Endothelial cell of umbilical vein (primary cell): ENCODE measurements at regions of chr3 and their contacts with region 1.

Region 1: DNA sequence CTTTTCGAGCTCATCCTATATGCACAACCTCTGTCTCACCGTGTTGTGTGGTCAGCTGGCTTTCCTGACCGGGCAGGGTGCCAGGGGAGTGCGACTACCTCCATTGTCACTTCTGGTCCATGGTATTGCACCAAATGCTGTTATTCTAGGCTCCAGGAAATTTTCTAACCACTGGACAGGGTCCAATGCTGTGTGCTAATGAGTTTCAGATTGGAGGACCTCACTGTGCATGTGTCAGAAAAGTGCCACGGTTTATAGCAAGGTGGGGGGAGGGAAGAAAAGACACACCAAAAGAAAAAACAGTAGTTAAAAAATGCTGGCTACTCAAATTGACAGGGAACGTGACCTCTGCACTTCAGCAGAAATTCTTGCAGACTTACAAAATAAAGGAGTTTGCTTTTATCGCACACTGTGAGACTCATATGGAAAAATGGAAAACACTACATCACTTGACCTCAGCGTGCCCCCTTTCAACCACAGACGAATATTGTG is 480.1 kb downstream of the FOXP1 start:
- DNase-seq: peak; percentile 94
- H3K4me3 ChIP-seq: no peak overlapping the region
- H3K27ac ChIP-seq: peak overlapping the region; percentile 92
- H3K4me1 ChIP-seq: peaks cover 65% of the 10 kb centered on the region
- H3K27me3 ChIP-seq: no peaks in the 10 kb centered on the region
- CTCF ChIP-seq: no peak
- POLR2A ChIP-seq: no peak

Region 2: DNA sequence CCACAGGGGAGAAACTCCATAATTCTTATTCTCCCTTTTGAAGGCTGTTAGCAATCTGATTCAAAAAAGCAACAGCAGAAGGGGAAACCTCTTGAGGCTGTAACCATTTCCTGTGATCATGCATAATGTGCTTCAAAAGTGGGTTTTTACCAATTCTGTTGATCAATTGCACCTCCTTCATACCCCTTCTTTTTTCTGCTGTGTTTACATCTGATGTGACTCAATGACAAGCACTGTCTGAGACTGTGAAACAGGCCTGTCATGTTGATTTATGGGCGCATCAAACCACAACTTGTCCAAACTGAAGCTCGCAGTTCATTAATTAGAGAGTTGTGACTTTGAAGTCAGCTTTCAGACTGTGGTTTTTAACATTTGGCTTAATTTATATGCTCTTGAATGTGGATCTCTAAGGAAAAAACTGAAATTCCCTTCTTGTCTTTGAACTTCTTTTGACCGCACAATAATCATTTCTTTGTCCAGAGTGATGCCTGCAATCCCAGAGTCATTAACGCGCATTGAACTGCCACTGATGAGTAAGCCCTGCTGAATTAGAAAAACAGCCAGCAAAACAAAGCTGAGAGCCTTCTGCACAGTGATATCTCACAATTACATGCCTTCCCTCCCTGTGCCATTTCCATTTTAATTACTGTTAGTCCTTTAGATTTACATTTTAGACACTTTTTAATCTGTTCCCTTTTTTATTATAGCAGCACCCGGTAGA is 52.8 kb before region 1 on chr3:
- CTCF ChIA-PET with region 1: interaction called, 4 read pairs
- POLR2A ChIA-PET with region 1: no interaction called
- dilution Hi-C with region 1: no loop called
- intact Hi-C with region 1: loop called (anchors 2 kb)
- DNase-seq: peak; percentile 91
- H3K4me3 ChIP-seq: no peak overlapping the region
- H3K27ac ChIP-seq: peak overlapping the region; percentile 88
- H3K4me1 ChIP-seq: peaks cover 97% of the 10 kb centered on the region
- H3K27me3 ChIP-seq: no peaks in the 10 kb centered on the region
- CTCF ChIP-seq: no peak
- POLR2A ChIP-seq: no peak

Region 3: GRCh38 chr3:71130471-71131374 is 27.2 kb after region 1 on chr3:
- CTCF ChIA-PET with region 1: interaction called, 10 read pairs
- POLR2A ChIA-PET with region 1: no interaction called
- dilution Hi-C with region 1: no loop called
- intact Hi-C with region 1: loop called (anchors 1 kb)
- DNase-seq: peak; percentile 84
- H3K4me3 ChIP-seq: peak overlapping the region; percentile 24 to 91 (median 87)
- H3K27ac ChIP-seq: peak overlapping the region; percentile 93
- H3K4me1 ChIP-seq: peaks cover 24% of the 10 kb centered on the region
- H3K27me3 ChIP-seq: no peaks in the 10 kb centered on the region
- CTCF ChIP-seq: no peak
- POLR2A ChIP-seq: no peak

Region 4: DNA sequence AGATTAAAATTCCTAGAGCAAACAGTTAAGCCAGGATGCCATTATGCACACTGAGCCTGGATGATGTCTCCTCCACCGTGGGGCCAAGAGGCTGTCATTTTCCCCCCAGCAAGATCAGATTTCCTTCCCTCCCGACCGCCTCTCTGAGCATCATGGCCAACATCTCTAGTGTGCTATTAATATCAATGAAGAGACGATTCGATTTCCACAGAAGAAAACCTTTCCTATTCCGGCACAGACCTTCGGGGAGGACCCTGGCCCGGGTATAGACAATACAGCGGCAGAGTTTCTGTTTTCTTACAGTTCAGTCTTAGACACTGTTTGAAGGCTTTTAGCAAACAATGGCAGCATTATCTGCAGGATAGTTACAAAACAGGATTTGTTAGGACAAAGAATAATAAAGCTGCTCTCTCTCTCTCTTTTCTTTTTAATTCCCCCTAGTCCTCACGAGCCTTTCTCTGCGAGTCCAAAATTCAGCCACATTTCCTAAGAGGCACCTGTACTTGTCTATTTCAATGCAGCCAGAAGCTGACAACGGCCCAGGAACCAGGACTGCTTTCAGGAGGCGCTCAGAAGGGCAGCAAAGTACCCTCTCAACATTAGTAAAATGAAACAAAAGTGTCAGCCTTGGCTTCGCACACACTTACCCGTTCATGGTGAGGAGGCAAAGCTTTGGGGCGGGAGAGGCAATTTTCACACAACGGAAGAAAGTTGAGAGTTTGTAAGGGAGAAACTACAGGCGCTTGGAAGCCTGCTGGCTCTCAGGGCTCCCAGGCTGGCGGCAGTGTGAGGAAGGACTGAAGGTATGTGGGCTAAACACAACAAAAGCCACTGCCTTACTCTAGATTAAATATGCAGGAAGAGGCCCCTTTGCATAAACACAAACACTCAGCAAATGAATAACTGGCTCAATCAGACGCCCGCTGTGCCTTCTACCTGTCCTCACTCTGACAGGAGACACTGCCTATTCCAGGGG is 202.0 kb after region 1 on chr3:
- CTCF ChIA-PET with region 1: no interaction called
- POLR2A ChIA-PET with region 1: no interaction called
- dilution Hi-C with region 1: no loop called
- intact Hi-C with region 1: loop called (anchors 10 kb)
- DNase-seq: peak; percentile 71
- H3K4me3 ChIP-seq: peak overlapping the region; percentile 24 to 60 (median 41)
- H3K27ac ChIP-seq: peak overlapping the region; percentile 19
- H3K4me1 ChIP-seq: peaks cover 24% of the 10 kb centered on the region
- H3K27me3 ChIP-seq: no peaks in the 10 kb centered on the region
- CTCF ChIP-seq: no peak
- POLR2A ChIP-seq: no peak